ENCODE measurements at regions of chrX and their contacts with region 1.

Region 1: GRCh38 chrX:65581661-65582339 is 47.2 kb upstream of the LAS1L start:
- DNase-seq: peak; percentile 44 to 62
- ATAC-seq: peak; percentile 96

Region 2: DNA sequence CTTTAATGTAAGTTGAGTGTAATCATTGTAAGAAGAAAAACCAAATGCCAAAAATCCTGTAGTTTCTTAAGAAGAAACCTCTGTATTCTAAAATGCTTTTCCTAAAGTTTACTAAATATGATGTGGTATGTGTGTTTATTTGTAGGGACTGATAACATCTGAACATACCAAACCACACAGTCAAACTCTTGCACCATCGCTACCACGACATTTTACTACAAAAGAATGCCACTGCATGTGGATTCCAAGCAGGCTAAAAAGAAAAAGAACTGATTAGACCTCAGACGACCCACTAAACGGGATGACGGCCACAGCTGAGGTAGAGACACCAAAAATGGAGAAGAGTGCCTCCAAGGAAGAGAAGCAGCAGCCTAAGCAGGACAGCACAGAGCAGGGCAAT is 93.3 kb before region 1 on chrX:
- intact Hi-C with region 1: no loop called
- DNase-seq: no peak
- ATAC-seq: no peak

Region 3: GRCh38 chrX:66728818-66729271 is 1147.0 kb after region 1 on chrX:
- intact Hi-C with region 1: loop called in 1 of 2 experiments (anchors 10 kb)
- DNase-seq: peak; percentile 37 to 54
- ATAC-seq: peak; percentile 99